ENCODE measurements at regions of chr15 and their contacts with region 1.

Region 1: DNA sequence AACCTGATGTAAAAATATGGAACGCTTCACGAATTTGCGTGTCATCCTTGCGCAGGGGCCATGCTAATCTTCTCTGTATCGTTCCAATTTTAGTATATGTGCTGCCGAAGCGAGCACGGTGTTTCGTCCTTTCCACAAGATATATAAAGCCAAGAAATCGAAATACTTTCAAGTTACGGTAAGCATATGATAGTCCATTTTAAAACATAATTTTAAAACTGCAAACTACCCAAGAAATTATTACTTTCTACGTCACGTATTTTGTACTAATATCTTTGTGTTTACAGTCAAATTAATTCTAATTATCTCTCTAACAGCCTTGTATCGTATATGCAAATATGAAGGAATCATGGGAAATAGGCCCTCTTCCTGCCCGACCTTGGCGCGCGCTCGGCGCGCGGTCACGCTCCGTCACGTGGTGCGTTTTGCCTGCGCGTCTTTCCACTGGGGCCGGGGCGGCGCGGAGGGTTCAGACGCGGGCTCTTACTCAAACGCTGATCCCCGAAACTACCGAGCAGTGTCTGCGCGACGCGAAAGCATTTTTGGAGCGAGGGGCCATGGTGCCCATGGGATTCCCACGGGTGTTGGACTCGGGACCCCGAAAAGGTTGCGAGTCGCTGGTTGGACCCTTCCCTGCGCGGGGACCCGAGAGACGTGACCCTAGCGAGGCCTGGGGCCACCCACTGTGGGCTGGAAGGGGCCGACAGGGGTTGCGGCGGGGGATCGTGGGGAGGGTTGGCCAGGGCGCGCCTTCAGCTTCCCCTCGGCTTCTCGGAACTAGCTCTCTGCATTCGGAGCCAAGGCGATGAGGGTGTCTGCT is at the start of gene RNU6-1:
- DNase-seq: peak; percentile 99
- H3K4me3 ChIP-seq: peak within 1 kb of the TSS; percentile 74
- H3K4me1 ChIP-seq: peaks cover 31% of the 10 kb centered on the region
- H3K27me3 ChIP-seq: no peaks in the 10 kb centered on the region

Region 2: GRCh38 chr15:67462875-67463274 is 377.3 kb before region 1 on chr15:
- in situ Hi-C with region 1: loop called (anchors 5 kb)
- DNase-seq: peak in 1 of 2 experiments; percentile 19
- H3K4me3 ChIP-seq: no peak overlapping the region
- H3K4me1 ChIP-seq: no peaks in the 10 kb centered on the region
- H3K27me3 ChIP-seq: no peaks in the 10 kb centered on the region